ENCODE measurements at regions of chr1 and their contacts with region 1.

Region 1: DNA sequence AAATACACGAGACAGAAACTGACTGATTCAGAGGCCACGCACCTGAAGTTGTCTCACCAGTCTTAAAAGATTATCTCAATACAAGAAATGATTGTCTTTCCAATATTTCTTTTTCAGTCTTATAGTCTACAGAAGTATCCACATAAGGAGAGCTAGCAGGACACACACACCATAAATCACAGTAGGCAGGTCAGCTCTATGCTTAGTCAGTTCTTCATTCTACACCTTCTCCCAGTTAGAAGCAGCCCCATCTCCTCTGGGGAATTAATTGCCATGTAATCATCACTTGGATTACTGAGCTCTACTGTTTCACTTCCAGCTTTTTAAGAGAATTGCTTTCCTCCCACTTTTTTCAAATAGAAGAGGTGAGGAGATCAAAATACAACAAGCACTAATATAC is 59.6 kb downstream of the SMYD3 start:
- DNase-seq: no peak
- H3K4me3 ChIP-seq: no peak overlapping the region
- H3K27ac ChIP-seq: no peak overlapping the region
- H3K4me1 ChIP-seq: peaks cover 0 to 4% (median 0%) of the 10 kb centered on the region in 6 donors
- H3K27me3 ChIP-seq: no peaks in the 10 kb centered on the region
- CTCF ChIP-seq: no peak
- POLR2A ChIP-seq: no peak

Region 2: DNA sequence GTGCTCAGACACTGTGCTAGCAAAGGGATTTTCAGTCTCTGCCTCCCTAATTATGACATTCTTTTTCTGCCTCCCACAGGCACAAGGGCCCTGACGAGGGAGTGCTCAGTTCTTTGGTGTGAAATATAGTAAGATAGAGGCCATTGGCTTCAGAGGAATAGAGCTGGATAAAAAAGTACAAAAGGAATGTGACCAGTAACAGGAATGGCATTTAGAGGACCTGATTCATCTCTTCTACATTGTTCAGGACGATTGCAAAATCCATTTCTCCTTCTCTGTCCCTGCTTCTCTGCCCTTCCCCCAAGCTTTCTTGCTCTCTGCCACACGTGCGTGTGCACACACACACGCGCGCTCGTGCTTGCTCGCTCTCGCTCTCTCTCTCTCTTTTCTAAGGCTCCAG is 624.5 kb before region 1 on chr1:
- intact Hi-C with region 1: no loop called
- DNase-seq: no peak
- H3K4me3 ChIP-seq: no peak overlapping the region
- H3K27ac ChIP-seq: no peak overlapping the region
- H3K4me1 ChIP-seq: no peaks in the 10 kb centered on the region
- H3K27me3 ChIP-seq: no peaks in the 10 kb centered on the region
- CTCF ChIP-seq: no peak
- POLR2A ChIP-seq: no peak

Region 3: DNA sequence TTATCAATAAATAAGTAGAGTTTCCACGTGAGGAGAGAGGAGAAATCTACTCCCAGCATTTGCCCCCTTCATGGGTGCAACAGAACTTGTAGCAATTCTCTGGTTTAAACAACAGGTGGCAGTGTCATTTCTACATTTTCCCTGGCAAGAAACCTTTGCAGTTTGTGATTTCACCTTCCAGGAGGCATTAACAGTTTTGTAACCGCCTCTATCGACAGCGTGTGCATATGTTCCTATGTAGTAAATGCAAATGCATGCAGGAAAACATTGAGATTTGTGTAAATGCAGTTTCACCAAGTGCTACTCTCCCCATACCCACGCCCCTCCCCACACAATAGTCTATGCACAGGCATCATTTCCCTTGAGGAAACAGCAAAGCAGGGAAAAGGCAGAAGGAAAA is 435.2 kb before region 1 on chr1:
- intact Hi-C with region 1: loop called (anchors 10 kb)
- DNase-seq: no peak
- H3K4me3 ChIP-seq: no peak overlapping the region
- H3K27ac ChIP-seq: no peak overlapping the region
- H3K4me1 ChIP-seq: peaks cover 0 to 4% (median 0%) of the 10 kb centered on the region in 6 donors
- H3K27me3 ChIP-seq: no peaks in the 10 kb centered on the region
- CTCF ChIP-seq: peak in 10 of 11 experiments; percentile 19 to 77 (median 54)
- POLR2A ChIP-seq: no peak

Measured in spleen (tissue), 13 donors.